ENCODE measurements at regions of chr4 and their contacts with region 1.

Region 1: GRCh38 chr4:158253350-158253980 is 43.2 kb downstream of the TMEM144 start:
- DNase-seq: peak in 5 of 10 donors; percentile 27 to 86 (median 60)

Region 2: GRCh38 chr4:157509276-157509799 is 744.1 kb before region 1 on chr4:
- intact Hi-C with region 1: no loop called
- DNase-seq: peak in 1 of 10 donors; percentile 8

Region 3: DNA sequence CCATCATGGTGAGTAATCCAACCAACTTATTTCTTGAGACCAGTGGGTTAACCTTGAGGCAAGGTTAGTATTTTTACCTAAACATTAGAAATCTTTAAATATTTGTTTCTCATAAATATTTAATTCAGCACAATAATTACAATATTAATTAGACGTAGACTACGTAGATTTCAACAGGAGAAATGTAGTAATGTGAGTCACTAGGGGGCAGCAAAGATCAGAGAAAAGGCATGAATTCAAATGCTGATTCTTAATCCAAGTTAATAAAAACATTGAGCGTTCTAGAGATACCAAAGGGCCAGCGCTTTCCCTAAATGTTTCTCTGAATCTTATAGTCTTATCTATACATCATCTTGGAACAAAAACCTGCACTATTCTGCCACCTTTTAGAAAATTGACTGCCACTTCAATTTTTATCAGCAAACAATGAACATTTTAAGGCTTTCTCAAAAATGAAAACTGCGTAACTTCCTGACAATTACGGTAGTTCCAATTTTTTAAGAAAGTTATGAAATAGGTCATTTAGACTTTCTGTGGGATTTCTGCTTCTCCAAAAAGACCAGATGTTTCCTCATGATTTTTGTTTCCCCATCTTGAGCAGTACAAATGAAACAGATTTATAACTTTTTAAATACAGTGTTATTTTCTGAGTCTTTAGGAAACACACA is 261.3 kb before region 1 on chr4:
- intact Hi-C with region 1: loop called (anchors 2 kb)
- DNase-seq: peak in 1 of 10 donors; percentile 46

Region 4: DNA sequence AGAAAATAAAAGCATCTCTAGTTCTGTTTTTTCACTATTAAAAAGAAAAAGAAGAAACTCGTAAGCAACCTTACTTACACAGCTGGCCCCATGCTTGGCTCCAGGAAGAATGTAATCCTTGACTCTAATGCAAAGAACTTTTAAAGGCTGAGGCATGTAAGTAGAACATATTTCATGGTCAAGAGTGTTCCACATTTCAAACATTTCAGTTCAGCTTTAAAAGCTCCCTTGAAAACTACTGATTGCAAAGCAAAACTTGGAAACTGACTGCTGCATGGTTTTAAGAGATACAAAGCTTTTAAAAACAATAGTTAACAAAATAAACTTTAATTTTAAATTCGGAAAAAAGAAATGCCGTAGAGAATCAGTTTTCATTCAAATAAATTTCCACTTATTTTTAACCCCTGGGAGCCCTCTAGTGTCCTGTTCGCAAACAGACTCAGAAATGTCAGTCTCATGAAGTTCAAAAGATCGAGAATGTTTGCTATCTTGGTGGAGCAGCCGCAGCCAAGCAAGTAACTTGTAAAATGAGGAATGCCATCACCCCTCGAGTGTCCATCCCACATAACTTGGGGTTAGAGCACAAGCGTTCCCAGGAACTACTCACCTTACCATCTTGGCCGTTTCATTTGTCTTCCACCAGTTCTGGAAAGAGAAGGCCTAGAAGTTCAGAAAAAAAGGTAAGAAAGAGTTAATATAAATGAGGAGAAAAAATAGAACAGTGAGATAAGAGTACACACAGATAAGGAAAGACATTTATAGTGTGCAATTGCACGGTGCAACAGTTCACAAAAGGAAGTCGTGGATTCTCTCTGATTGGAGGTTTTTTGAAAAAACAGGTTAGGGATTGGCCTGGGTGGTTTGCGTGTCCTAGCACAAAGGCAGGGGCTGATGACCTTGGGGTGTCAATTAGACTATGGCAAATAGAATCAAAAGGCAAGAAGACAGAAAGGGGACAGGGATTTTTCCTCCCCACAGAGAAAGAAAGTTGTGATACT is 80.9 kb before region 1 on chr4 and contains the start of gene GASK1B:
- intact Hi-C with region 1: loop called (anchors 5 kb)
- DNase-seq: peak in 2 of 10 donors; percentile 11 to 45

Region 5: DNA sequence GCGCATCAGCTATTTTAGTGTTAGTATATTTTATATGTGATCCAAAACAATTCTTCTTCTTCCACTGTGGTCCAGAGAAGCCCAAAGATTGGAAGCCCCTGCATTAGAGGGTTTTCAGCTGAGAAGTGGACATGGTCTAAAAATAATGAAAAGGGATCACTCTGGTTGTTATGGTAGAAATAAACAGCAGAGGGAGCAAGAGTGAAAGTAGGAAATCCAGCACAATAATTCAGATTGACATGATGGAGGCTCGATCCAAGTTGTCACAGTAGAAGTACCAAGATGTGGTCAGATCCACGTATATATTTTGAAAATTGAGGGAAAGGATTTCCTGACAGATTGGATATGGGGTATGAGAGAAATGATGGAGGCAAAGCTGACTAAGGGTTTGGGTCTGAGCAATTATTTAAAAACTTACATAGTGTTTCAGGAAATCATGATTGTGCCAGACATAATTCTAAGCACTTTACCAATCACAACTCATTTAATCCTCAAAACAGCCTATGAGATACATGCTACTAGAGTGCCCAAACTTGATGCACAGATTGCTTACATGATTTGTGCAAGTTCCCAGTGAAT is 60.2 kb before region 1 on chr4:
- intact Hi-C with region 1: loop called (anchors 5 kb)
- DNase-seq: no peak

Region 6: DNA sequence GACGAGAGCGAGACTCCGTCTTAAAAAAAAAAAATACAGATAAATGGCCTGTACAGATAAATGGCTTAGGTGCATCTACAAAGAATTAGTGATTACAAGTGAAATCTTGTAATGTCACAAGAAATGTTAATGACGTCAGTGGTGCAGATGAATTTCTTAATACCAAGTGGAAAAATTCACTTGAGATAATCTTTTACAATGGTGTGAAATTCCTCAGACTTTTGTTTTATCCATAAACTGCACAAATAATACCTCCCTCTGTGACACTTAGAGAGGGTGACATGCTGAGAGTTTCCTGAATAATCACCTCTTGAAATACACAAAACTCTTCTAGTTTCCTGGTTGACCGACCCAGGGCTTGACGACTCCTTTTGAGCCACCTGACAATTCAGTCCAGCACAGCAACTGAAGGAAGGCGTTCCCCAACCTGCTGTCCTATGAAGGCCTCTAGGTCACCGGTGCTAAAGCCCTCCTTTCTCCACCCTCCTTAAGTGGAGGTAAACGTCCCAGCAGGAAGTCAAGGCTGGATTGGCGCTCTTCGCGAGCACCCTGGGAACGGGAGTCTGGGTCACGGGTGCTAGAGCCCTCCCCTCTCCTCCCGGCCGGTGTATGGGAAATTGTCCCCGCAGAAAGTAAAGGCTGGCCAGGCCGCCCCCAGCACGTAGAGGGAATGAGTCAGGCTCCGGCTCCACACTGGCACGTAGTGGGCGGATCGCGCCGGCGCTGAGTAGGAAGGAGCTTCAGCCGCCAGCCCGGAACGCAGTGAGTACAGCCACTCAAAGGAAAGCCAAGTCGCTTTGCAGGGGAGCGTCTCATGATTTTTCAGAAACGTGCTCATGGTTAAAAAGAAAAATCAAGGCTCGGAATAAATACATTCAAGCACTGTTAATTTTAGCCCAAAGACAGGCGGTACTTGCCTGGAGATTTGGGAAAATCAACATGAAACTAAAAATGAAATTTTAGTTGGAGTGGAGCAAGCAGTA is 43.3 kb before region 1 on chr4 and contains the start of gene TMEM144:
- intact Hi-C with region 1: loop called (anchors 5 kb)
- DNase-seq: peak; percentile 90 to 99 (median 95)

Region 7: GRCh38 chr4:158624889-158625478 is 371.5 kb after region 1 on chr4:
- intact Hi-C with region 1: loop called (anchors 5 kb)
- DNase-seq: no peak